ENCODE measurements at regions of chr9 and their contacts with region 1.

Region 1: GRCh38 chr9:15205632-15206420 is 101.2 kb downstream of the TTC39B start:
- ATAC-seq: peak in 1 of 8 experiments; percentile 27
- H3K4me3 ChIP-seq: no peak overlapping the region
- H3K27ac ChIP-seq: no peak overlapping the region
- H3K4me1 ChIP-seq: no peaks in the 10 kb centered on the region

Region 2: GRCh38 chr9:15104826-15105420 is 100.9 kb before region 1 on chr9:
- in situ Hi-C with region 1: no loop called
- ATAC-seq: peak in 4 of 8 experiments; percentile 43 to 65 (median 55)
- H3K4me3 ChIP-seq: no peak overlapping the region
- H3K27ac ChIP-seq: no peak overlapping the region
- H3K4me1 ChIP-seq: no peaks in the 10 kb centered on the region

Region 3: GRCh38 chr9:15416880-15417279 is 211.1 kb after region 1 on chr9:
- in situ Hi-C with region 1: loop called in 1 of 9 experiments (anchors 10 kb)
- ATAC-seq: peak in 3 of 8 experiments; percentile 46 to 75 (median 48)
- H3K4me3 ChIP-seq: no peak overlapping the region
- H3K27ac ChIP-seq: no peak overlapping the region
- H3K4me1 ChIP-seq: peaks cover 2 to 3% of the 10 kb centered on the region in 2 donors

Region 4: GRCh38 chr9:16794871-16795639 is 1589.2 kb after region 1 on chr9:
- in situ Hi-C with region 1: no loop called
- ATAC-seq: peak in 3 of 8 experiments; percentile 51 to 95 (median 95)
- H3K4me3 ChIP-seq: no peak overlapping the region
- H3K27ac ChIP-seq: no peak overlapping the region
- H3K4me1 ChIP-seq: no peaks in the 10 kb centered on the region